ENCODE measurements at regions of chr3 and their contacts with region 1.

Region 1: DNA sequence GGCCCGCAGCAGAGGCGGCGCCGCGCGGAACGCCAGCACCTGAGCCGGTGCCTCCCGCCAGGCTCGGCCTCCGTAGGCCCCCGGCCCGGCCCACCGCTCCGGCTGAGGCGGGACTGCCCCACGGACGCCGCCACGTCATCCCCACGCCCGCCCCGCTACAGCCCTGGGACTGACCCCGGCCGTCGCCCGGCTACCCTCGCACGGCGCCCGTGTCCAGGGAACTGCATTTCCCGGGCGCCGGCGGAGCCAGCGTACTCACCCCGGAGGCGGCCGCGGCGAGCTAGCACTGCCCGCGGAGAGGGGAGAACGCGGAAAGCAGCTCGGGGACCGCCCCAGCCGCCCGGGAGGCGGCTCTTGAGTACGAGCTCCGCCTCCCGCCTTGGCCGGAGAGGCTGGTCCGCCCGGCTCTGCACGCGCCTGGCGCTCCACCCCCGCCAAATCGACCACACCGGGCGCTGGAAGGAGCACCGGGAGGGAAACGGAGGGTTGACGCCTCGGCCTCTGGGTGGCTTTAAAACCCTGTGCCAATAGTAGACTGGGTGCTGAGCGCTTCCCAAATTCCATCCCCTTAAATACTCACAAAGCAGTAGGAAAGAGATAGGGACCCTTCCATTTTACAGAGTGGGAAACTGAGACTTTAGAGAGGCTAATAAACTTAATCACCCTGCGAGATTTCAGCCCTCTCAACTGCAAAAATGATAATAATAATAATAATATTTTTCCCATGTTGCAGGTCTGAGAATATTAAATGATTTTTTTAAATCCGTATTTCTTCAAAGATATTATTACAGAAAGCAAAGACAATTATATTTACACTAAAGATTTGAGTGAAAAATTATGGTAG is at the start of gene B4GALT4:
- DNase-seq: peak; percentile 76 to 91
- H3K4me3 ChIP-seq: peak within 1 kb of the TSS; percentile 85
- H3K27ac ChIP-seq: peak within 1 kb of the TSS; percentile 68
- H3K4me1 ChIP-seq: peaks cover 14% of the 10 kb centered on the region
- H3K27me3 ChIP-seq: no peaks in the 10 kb centered on the region
- CTCF ChIP-seq: no peak
- total RNA-seq, gene B4GALT4: 21.8 and 32.9 TPM in 2 replicates

Region 2: GRCh38 chr3:118884748-118885206 is 356.0 kb before region 1 on chr3:
- CTCF ChIA-PET with region 1: interaction called, 5 read pairs
- POLR2A ChIA-PET with region 1: no interaction called
- intact Hi-C with region 1: loop called (anchors 1 kb)
- DNase-seq: peak in 1 of 2 experiments; percentile 66
- H3K4me3 ChIP-seq: no peak overlapping the region
- H3K27ac ChIP-seq: no peak overlapping the region
- H3K4me1 ChIP-seq: no peaks in the 10 kb centered on the region
- H3K27me3 ChIP-seq: no peaks in the 10 kb centered on the region
- CTCF ChIP-seq: peak; percentile 83

Region 3: GRCh38 chr3:119098619-119099222 is 142.1 kb before region 1 on chr3:
- CTCF ChIA-PET with region 1: interaction called, 5 read pairs
- POLR2A ChIA-PET with region 1: no interaction called
- intact Hi-C with region 1: loop called (anchors 1 kb)
- DNase-seq: peak in 1 of 2 experiments; percentile 14
- H3K4me3 ChIP-seq: no peak overlapping the region
- H3K27ac ChIP-seq: no peak overlapping the region
- H3K4me1 ChIP-seq: no peaks in the 10 kb centered on the region
- H3K27me3 ChIP-seq: no peaks in the 10 kb centered on the region
- CTCF ChIP-seq: peak; percentile 83

Region 4: DNA sequence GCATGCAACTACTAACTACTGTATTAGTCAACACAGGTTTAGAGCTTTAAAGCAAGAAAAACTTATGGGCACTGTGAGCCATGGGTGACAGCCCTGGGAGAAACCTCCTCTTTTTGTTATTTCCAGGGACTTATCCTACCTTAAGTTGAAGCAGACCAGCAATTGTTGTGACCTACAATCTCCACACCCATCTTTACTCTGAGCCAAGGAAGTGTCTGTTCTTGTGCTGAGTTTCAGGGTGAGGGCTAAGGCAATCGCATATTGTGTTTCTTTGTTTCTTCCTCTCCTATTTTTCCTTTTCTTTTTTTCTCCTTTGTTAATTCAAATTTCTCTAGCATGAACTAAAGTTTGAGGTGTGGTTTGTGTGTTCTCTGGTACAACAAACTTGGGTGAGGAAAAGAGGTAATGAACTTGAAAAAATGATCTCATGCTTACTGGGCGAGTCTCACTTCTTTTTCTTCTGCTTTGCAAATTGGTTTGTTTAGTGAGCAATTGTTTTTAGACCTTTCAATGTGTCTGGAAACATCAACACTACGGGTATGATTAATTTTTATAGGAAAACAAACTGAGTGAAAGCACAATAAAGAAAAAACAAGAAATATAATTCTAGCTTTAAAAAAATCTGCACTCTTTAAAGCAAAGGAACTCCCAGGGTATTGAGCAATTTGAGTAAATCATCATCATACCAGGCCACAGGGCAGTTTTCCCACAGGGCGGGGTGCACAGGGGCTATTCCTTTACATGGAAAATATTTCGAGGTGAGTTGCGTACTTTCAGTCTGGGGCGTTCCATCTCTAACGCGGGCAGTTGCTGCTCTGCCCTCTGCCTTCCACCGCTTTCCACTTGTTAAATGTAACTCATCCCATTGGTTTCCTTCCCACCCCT is 64.7 kb before region 1 on chr3:
- CTCF ChIA-PET with region 1: no interaction called
- POLR2A ChIA-PET with region 1: no interaction called
- intact Hi-C with region 1: loop called (anchors 2 kb)
- DNase-seq: peak; percentile 72 to 86
- H3K4me3 ChIP-seq: peak overlapping the region; percentile 38; the same call in 1 of the 2 replicates
- H3K27ac ChIP-seq: peak overlapping the region; percentile 95
- H3K4me1 ChIP-seq: peaks cover 28% of the 10 kb centered on the region
- H3K27me3 ChIP-seq: no peaks in the 10 kb centered on the region
- CTCF ChIP-seq: no peak

Region 5: DNA sequence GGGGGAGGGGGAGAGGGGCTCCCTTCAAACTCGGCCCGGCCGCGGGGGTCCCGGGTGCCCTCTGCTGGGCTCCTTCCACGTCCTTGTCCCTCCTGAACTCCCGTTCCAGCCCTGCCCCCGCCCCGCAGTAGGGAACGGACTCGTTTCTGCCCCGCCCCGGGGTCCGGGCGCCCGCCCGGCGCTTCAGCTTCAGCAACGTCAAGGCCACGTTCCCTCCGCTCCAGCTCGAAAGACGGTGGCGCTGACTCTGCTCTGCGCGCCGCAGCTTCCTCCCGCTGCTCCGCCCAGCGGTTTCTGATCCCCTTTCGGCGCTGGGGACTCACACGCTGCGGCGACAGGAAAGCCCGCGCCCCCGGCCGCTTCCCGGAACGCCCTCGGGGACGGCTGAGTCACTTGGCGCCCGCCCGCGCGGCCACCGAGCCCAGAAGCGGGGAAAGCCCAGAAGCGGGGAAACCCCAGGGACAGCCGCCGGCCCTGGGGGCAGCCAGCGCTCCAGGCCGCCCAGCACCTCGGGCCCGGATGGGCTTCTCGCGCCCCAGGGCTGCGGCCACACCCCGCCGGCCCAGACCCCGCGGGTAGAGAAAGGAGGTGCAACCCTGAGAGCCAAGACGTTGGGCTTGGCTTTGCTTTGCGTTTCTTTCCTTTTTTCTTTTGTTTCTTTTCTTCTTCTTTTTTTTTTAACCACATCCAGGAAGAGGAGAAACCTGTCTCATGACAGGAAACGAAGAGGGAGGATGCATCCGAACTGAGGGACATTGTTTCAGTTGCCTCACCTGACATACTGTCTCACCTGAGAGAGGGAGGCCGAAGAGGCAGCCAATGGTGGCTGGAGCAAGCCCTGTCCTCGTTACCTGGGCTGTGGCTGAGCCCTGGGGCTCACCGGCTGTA is 82.3 kb after region 1 on chr3:
- CTCF ChIA-PET with region 1: interaction called, 3 read pairs
- POLR2A ChIA-PET with region 1: no interaction called
- intact Hi-C with region 1: loop called (anchors 2 kb)
- DNase-seq: peak; percentile 75 to 85
- H3K4me3 ChIP-seq: peak overlapping the region; percentile 81
- H3K27ac ChIP-seq: peak overlapping the region; percentile 73
- H3K4me1 ChIP-seq: peaks cover 15% of the 10 kb centered on the region
- H3K27me3 ChIP-seq: no peaks in the 10 kb centered on the region
- CTCF ChIP-seq: no peak; the same call in 1 of the 2 replicates

Region 6: GRCh38 chr3:119380697-119381096 is 139.9 kb after region 1 on chr3:
- CTCF ChIA-PET with region 1: no interaction called
- POLR2A ChIA-PET with region 1: no interaction called
- intact Hi-C with region 1: loop called (anchors 10 kb)
- DNase-seq: no peak
- H3K4me3 ChIP-seq: no peak overlapping the region
- H3K27ac ChIP-seq: no peak overlapping the region
- H3K4me1 ChIP-seq: no peaks in the 10 kb centered on the region
- H3K27me3 ChIP-seq: no peaks in the 10 kb centered on the region
- CTCF ChIP-seq: no peak

Region 7: GRCh38 chr3:120182724-120183524 is 942.1 kb after region 1 on chr3:
- CTCF ChIA-PET with region 1: no interaction called
- POLR2A ChIA-PET with region 1: no interaction called
- intact Hi-C with region 1: no loop called
- DNase-seq: peak; percentile 53 to 57
- H3K4me3 ChIP-seq: no peak overlapping the region
- H3K27ac ChIP-seq: peak overlapping the region; percentile 7; the same call in 1 of the 2 replicates
- H3K4me1 ChIP-seq: peaks cover 38% of the 10 kb centered on the region
- H3K27me3 ChIP-seq: no peaks in the 10 kb centered on the region
- CTCF ChIP-seq: peak; percentile 61

Region 8: DNA sequence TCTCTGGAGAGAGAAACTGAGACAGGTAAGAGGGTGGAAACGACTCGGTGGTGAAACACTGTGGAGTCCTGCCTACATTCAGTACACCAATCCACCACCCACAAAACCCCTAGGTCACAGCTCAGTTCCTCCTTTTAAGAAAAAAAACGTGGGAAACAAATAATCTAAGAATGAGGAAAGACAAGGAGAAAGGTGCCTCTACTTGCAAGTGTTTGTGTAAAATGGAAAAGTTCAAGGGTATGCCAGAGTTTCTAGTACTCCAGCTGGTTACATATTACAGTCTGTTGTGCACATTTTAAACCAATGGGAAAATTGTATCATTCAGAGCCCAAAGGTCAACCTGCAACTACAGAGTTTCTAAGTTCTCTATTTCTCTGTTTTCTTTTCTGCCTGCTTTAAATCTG is 1409.0 kb after region 1 on chr3:
- CTCF ChIA-PET with region 1: interaction called, 18 read pairs
- POLR2A ChIA-PET with region 1: no interaction called
- intact Hi-C with region 1: no loop called
- DNase-seq: no peak
- H3K4me3 ChIP-seq: no peak overlapping the region
- H3K27ac ChIP-seq: no peak overlapping the region
- H3K4me1 ChIP-seq: no peaks in the 10 kb centered on the region
- H3K27me3 ChIP-seq: no peaks in the 10 kb centered on the region
- CTCF ChIP-seq: no peak

Measured in PC-9 (cell line).